ENCODE measurements at regions of chr1 and their contacts with region 1.

Region 1: DNA sequence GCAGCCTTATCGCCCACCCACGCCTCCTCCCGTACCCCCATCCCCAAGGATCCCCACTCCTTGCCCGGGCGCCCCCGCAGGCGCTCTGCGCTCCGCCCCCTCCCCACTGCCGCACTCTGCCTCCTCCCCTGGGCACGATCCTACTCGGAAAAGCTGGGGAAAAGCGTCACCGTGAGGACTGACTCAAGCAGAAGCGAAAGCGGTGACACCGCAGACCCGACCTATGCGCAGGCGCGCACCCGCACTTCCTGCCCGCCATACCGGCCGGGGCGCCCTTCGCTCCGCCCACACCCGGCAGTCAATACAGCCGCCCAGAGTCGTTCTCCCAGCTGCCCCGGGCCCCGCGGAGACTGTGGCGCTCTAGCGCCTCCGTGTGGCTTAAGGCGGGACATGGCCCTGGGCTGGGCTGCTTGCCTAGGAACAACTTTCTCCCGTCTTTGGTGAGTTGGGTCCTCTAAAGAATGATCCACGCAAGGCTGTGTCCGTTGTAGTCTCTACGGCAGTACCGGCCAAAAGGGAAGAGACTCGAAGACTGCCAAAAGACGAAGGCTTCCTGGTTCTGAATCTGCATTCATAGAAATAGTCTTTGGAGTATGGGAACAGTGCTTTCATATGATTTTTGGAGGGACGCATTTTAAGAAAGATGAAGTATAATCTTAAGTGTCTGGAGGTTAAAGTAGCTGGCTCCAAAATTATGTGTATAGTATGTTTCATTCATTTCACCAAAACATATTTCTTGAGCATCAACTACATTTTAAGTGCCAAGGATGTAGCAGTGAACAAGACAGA is at the start of gene OMA1:
- DNase-seq: peak; percentile 98
- H3K4me3 Mint-ChIP-seq: peak within 1 kb of the TSS; percentile 91
- H3K27ac Mint-ChIP-seq: peak within 1 kb of the TSS; percentile 97
- H3K4me1 Mint-ChIP-seq: peaks cover 13% of the 10 kb centered on the region
- H3K27me3 Mint-ChIP-seq: no peaks in the 10 kb centered on the region
- total RNA-seq, gene OMA1: 15.4 to 16.6 TPM

Region 2: GRCh38 chr1:58249737-58250586 is 296.8 kb before region 1 on chr1:
- CTCF ChIA-PET with region 1: no interaction called
- intact Hi-C with region 1: loop called (anchors 1 kb)
- DNase-seq: peak; percentile 29
- H3K4me3 Mint-ChIP-seq: peak overlapping the region; percentile 60
- H3K27ac Mint-ChIP-seq: no peak overlapping the region
- H3K4me1 Mint-ChIP-seq: peaks cover 15% of the 10 kb centered on the region
- H3K27me3 Mint-ChIP-seq: peaks cover 32% of the 10 kb centered on the region

Region 3: DNA sequence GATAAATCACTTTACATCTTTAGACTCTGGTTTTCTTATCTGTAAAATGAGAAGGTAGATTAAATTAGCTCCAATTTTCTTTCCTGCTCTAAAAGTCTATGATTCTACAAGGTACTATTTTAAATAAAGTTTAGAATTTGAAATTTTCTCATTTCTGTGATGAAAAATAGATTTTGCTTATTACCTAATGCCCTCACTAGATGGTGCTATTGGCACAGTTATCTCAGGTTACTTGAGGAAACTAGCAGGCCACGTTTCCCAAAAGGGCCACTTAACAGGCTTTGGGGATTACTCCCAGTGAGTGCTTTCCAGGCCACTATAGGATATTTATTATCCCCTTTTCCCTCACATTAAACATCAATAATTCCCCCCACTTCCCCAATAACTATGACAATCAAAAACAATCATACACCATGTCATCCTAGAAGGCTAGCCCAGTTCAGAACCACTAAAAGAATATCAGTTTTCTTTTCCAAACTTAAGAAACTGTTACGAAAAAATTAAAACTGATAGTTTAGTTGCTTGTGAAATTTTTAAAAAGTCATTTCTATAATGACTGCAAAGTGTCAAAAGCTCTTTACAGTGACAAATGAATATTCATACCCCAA is 30.8 kb before region 1 on chr1:
- CTCF ChIA-PET with region 1: interaction called, 62 read pairs
- intact Hi-C with region 1: loop called (anchors 1 kb)
- DNase-seq: peak; percentile 35
- H3K4me3 Mint-ChIP-seq: no peak overlapping the region
- H3K27ac Mint-ChIP-seq: peak overlapping the region; percentile 38
- H3K4me1 Mint-ChIP-seq: peaks cover 7% of the 10 kb centered on the region
- H3K27me3 Mint-ChIP-seq: no peaks in the 10 kb centered on the region

Region 4: GRCh38 chr1:58652651-58653184 is 106.0 kb after region 1 on chr1:
- CTCF ChIA-PET with region 1: interaction called, 3 read pairs
- intact Hi-C with region 1: loop called (anchors 1 kb)
- DNase-seq: peak; percentile 74
- H3K4me3 Mint-ChIP-seq: no peak overlapping the region
- H3K27ac Mint-ChIP-seq: no peak overlapping the region
- H3K4me1 Mint-ChIP-seq: peaks cover 17% of the 10 kb centered on the region
- H3K27me3 Mint-ChIP-seq: no peaks in the 10 kb centered on the region

Region 5: GRCh38 chr1:59759156-59759925 is 1212.6 kb after region 1 on chr1:
- CTCF ChIA-PET with region 1: no interaction called
- intact Hi-C with region 1: loop called (anchors 1 kb)
- DNase-seq: peak; percentile 83
- H3K4me3 Mint-ChIP-seq: peak overlapping the region; percentile 47
- H3K27ac Mint-ChIP-seq: peak overlapping the region; percentile 53
- H3K4me1 Mint-ChIP-seq: peaks cover 4% of the 10 kb centered on the region
- H3K27me3 Mint-ChIP-seq: no peaks in the 10 kb centered on the region

Measured in activated naive CD4-positive, alpha-beta T cell treated with anti-CD3 and anti-CD28 coated beads for 36 hours (primary cell).